Activated CD8-positive, alpha-beta memory T cell treated with anti-CD3 and anti-CD28 coated beads, Interleukin-2, amount 10 ng/mL, durations not matched to agents 7 days and 5 days (primary cell): ENCODE measurements at regions of chr11 and their contacts with region 1.

Region 1: DNA sequence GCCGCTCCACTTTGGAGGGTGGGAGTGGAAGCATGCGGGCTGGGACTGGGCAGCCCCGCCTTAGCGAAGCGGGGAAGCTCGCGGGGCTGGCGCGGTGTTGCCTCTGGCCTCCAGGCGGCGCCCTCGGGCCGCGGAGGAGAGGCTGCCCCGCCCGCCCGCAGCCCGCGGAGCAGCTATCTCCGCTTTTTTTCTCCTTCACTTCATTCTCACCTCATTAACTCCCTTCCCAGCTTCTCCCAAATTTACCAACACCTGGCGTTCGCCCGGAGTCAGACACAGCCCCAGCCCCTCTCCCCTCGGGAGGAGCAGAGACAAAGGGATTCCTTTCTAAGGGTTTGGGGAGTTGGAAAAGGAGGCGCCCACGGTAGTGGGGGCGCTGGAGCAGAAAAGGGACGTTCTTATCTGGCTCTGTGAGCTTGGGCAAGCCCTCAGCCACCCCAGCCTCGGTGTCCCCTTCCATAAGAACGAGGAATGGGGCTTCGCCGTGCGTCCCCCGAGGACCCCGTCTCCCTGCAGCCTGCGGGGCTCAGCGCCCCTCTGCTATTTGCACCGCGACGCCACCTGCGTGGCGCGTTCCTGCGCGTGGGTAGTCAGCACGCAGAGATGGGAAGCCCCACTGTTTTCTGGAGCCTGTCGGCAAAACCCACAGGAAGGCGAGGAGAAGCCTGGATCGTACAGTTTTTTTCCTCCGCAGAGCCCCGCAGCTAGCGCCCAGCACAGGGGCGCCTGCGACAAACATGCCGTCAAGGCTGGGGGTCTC is 1.5 kb upstream of the WNT11 start:
- DNase-seq: peak; percentile 81
- ATAC-seq: peak; percentile 75
- H3K4me3 Mint-ChIP-seq: peak overlapping the region; percentile 73
- H3K27ac Mint-ChIP-seq: no peak overlapping the region
- H3K4me1 Mint-ChIP-seq: peaks cover 17% of the 10 kb centered on the region
- H3K27me3 Mint-ChIP-seq: peaks cover 68% of the 10 kb centered on the region

Region 2: GRCh38 chr11:76030286-76030685 is 177.5 kb before region 1 on chr11:
- CTCF ChIA-PET with region 1: no interaction called
- DNase-seq: no peak
- ATAC-seq: no peak
- H3K4me3 Mint-ChIP-seq: no peak overlapping the region
- H3K27ac Mint-ChIP-seq: no peak overlapping the region
- H3K4me1 Mint-ChIP-seq: no peaks in the 10 kb centered on the region
- H3K27me3 Mint-ChIP-seq: no peaks in the 10 kb centered on the region

Region 3: GRCh38 chr11:76152086-76152681 is 55.6 kb before region 1 on chr11:
- CTCF ChIA-PET with region 1: interaction called, 23 read pairs
- DNase-seq: peak; percentile 92
- ATAC-seq: peak; percentile 95
- H3K4me3 Mint-ChIP-seq: peak overlapping the region; percentile 60
- H3K27ac Mint-ChIP-seq: peak overlapping the region; percentile 12
- H3K4me1 Mint-ChIP-seq: peaks cover 25% of the 10 kb centered on the region
- H3K27me3 Mint-ChIP-seq: peaks cover 14% of the 10 kb centered on the region

Region 4: GRCh38 chr11:76185931-76186401 is 21.9 kb before region 1 on chr11:
- CTCF ChIA-PET with region 1: no interaction called
- DNase-seq: no peak
- ATAC-seq: no peak
- H3K4me3 Mint-ChIP-seq: no peak overlapping the region
- H3K27ac Mint-ChIP-seq: no peak overlapping the region
- H3K4me1 Mint-ChIP-seq: no peaks in the 10 kb centered on the region
- H3K27me3 Mint-ChIP-seq: peaks cover 2% of the 10 kb centered on the region

Region 5: DNA sequence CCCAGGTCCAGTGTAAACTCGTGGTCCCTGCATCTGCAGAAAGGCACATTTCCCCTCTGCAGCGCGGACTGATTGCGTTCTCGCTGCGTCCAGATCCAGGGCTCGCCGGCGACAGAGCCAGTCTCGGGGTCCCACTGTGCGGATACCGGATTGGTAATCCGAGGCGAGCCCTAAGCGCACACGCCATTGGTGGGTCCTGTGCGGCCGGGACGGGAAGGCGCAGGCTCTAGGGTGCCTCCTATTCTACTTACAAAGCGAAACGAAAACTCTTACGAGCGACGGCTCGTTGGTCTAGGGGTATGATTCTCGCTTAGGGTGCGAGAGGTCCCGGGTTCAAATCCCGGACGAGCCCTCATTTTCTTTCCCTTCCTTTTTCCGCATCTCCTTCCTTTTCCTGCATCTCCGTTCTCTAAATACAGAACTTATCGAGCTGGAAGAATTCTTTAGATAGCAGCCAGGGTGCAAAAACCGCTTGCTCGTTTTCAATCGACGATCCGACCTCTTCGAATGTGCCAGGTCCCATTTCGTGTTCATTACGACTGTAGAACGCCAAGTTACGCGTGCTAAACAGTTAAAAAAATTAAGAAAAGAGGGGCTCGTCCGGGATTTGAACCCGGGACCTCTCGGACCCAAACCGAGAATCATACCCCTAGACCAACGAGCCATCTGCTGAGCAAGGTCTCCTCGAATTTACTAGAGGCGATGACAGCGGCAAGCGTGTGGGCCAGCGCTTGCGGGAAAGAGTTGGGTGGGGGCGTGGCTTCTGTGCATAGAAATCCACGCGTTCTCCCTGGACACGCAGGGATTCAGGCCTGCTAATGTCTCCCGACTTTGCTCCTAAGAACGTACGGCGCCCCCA is 27.6 kb after region 1 on chr11:
- CTCF ChIA-PET with region 1: interaction called, 87 read pairs
- DNase-seq: peak; percentile 95
- ATAC-seq: peak; percentile 89
- H3K4me3 Mint-ChIP-seq: peak overlapping the region; percentile 77
- H3K27ac Mint-ChIP-seq: peak overlapping the region; percentile 95
- H3K4me1 Mint-ChIP-seq: peaks cover 52% of the 10 kb centered on the region
- H3K27me3 Mint-ChIP-seq: peaks cover 17% of the 10 kb centered on the region

Region 6: DNA sequence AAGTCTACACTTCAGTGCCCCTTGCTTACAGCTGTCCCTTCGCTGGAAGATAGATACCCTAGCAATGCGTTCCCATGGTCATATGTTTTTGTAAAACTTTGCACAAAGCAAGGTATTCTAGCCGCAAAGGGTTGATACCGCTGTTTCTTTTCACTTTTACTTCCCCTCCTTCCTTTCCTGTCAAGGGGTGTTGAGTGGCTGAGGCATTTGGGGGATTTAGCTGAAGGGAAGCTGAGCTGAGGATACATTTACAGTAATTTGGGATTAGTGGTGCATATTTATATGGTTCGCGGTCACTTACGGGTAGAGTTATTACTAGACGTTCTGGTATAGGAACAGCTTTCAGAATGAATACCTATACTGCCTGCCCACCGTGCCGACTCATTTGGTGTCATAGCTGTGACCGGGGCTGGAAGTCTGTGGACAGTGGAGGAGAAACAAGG is 85.4 kb after region 1 on chr11:
- CTCF ChIA-PET with region 1: interaction called, 34 read pairs
- DNase-seq: peak; percentile 81
- ATAC-seq: peak; percentile 85
- H3K4me3 Mint-ChIP-seq: peak overlapping the region; percentile 13
- H3K27ac Mint-ChIP-seq: no peak overlapping the region
- H3K4me1 Mint-ChIP-seq: peaks cover 19% of the 10 kb centered on the region
- H3K27me3 Mint-ChIP-seq: peaks cover 55% of the 10 kb centered on the region

Region 7: DNA sequence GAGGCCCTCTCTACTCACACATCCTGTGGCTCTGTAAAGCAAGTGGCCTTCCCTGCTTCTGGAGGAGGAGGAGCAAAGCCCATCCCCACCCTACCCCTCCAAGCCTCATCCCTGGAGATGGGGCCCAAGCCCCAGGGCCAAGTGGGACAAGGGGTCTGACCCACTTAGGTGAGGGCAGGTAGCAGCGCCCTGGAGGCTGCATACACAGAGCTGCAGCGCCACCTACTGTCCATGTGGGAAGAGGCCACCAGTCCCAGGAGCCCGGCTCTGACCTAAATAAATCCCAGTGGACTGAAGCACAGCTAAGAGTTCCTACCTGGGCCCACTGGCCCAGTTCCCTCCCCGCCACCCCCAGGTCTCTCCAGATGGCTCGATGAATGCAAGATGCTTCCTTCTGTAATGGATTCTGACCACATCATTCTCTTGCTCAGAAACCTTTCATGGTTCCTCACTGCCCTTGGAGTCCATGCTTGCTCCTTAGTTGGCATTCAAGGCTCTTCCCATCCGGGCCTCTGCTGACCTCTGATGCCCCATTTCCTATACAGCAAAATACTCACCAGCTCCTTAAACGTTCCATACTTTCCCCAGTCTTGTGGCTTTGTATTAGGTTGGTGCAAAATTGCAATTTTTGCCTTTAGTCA is 111.0 kb after region 1 on chr11:
- CTCF ChIA-PET with region 1: interaction called, 298 read pairs
- DNase-seq: peak; percentile 85
- ATAC-seq: peak; percentile 96
- H3K4me3 Mint-ChIP-seq: no peak overlapping the region
- H3K27ac Mint-ChIP-seq: no peak overlapping the region
- H3K4me1 Mint-ChIP-seq: peaks cover 11% of the 10 kb centered on the region
- H3K27me3 Mint-ChIP-seq: peaks cover 45% of the 10 kb centered on the region

Region 8: GRCh38 chr11:76380967-76381719 is 173.3 kb after region 1 on chr11 and contains the starts of genes GVQW3 and THAP12:
- CTCF ChIA-PET with region 1: interaction called, 16 read pairs
- DNase-seq: peak; percentile 98
- ATAC-seq: peak; percentile 87
- H3K4me3 Mint-ChIP-seq: peak within 1 kb of the TSS; percentile 86
- H3K27ac Mint-ChIP-seq: peak within 1 kb of the TSS; percentile 89
- H3K4me1 Mint-ChIP-seq: peaks cover 55% of the 10 kb centered on the region
- H3K27me3 Mint-ChIP-seq: no peaks in the 10 kb centered on the region
- total RNA-seq, gene GVQW3: 3.5 to 4.0 TPM
- total RNA-seq, gene THAP12: 39.8 to 44.8 TPM

Region 9: DNA sequence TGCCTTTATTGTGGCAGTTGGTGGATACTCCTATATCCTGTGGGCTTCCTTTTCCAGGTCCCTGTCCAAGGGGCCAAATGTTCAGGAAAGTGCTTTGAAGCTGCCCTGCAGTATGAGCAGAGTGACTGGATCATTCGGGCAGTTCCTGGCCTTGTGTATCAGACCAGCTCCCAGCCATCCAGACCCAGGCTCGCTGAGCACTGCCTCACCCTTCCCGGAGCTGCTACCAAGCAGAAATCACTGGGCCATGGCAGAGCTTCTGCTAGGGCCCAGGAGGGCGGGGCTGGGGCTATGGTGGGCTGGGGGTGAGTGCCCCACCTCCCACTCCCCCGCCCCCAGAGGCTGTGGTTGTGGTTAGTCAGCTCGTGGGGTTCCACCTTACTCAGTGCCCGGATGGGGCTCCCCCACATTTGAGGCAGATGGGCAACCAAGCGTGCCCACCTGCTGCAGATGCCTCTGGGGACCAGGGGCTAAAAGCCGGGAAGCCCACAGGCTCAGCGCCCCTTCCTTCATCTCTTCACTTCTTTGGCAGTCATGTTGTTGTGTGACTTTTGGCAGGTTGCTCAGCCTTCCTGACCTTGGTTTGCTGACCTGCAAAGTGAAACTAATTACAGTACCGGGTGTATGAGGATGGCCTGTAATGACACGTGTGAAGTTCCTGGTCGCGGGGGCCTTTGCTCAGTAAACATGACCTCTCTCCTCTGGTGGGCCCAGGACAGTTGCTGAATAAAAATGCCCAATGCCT is 464.8 kb after region 1 on chr11:
- CTCF ChIA-PET with region 1: interaction called, 14 read pairs
- DNase-seq: peak; percentile 64
- ATAC-seq: peak; percentile 75
- H3K4me3 Mint-ChIP-seq: peak overlapping the region; percentile 38
- H3K27ac Mint-ChIP-seq: peak overlapping the region; percentile 69
- H3K4me1 Mint-ChIP-seq: peaks cover 37% of the 10 kb centered on the region
- H3K27me3 Mint-ChIP-seq: peaks cover 34% of the 10 kb centered on the region